OCI-LY7 (cell line): ENCODE measurements at regions of chr9 and their contacts with region 1.

Region 1: GRCh38 chr9:15390205-15390604 is 32.5 kb upstream of the SNAPC3 start:
- DNase-seq: no peak
- H3K4me3 ChIP-seq: no peak overlapping the region
- H3K27ac ChIP-seq: no peak overlapping the region
- H3K4me1 ChIP-seq: no peaks in the 10 kb centered on the region
- CTCF ChIP-seq: no peak

Region 2: DNA sequence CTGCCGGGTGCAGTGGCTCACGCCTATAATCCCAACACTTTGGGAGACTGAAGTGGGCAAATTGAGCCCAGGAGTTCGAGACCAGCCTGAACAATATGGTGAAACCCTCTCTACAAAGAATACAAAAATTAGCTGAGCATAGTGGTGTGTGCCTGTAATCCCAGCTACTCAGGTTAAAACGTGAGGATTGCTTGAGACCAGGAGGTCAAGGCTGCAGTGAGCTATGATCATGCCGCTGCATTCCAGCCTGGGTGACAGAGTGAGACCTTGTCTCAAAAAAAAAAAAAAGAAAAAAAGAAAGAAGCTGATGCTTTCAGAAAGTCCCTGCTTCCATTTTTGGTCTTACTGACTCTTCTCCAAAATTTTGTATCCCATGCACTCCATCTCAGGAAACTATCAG is 63.8 kb after region 1 on chr9:
- CTCF ChIA-PET with region 1: no interaction called
- POLR2A ChIA-PET with region 1: interaction called, 3 read pairs
- intact Hi-C with region 1: loop called (anchors 10 kb)
- DNase-seq: no peak
- H3K4me3 ChIP-seq: no peak overlapping the region
- H3K27ac ChIP-seq: no peak overlapping the region
- H3K4me1 ChIP-seq: no peaks in the 10 kb centered on the region
- CTCF ChIP-seq: no peak

Region 3: GRCh38 chr9:15642369-15642962 is 252.3 kb after region 1 on chr9:
- CTCF ChIA-PET with region 1: no interaction called
- POLR2A ChIA-PET with region 1: no interaction called
- intact Hi-C with region 1: loop called (anchors 10 kb)
- DNase-seq: peak; percentile 65
- H3K4me3 ChIP-seq: no peak overlapping the region
- H3K27ac ChIP-seq: no peak overlapping the region
- H3K4me1 ChIP-seq: no peaks in the 10 kb centered on the region
- CTCF ChIP-seq: peak; percentile 85